ENCODE measurements at regions of chr15 and their contacts with region 1.

Region 1: DNA sequence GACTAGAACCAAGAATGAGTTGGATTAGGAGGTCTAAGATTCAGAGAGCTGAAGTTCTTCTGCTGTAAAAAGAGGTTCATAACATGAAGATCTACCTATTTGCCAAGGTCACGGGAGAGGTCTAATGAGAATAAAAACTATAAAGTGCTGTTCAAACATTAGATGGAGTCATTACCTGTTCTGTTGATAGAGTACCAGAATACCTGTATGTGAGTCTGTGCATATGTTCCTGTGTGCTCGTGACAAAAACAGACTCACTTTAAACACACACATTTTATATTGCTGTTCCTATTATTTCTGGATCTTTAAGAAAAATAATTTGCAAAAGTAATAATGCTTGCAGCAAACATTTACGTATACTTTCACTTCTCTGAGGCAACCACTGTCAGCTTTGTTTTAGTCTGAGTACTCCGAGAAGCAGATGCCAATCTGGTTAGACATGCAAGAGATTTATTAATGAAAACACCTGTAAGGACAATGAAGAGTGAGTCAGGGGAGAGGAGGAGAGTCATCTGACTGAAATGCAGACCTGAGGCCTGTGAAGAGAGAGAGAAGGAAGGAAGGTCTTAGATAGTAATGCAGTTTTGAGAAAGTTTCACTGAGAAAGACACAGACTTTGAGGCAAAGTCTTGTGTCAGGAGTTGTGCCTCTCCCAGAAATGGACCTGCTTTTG is 221.2 kb downstream of the SQOR start:
- DNase-seq: peak; percentile 24
- H3K4me3 Mint-ChIP-seq: peak overlapping the region; percentile 3
- H3K27ac Mint-ChIP-seq: peak overlapping the region; percentile 61
- H3K4me1 Mint-ChIP-seq: peaks cover 25% of the 10 kb centered on the region
- H3K27me3 Mint-ChIP-seq: no peaks in the 10 kb centered on the region
- CTCF ChIP-seq: no peak

Region 2: DNA sequence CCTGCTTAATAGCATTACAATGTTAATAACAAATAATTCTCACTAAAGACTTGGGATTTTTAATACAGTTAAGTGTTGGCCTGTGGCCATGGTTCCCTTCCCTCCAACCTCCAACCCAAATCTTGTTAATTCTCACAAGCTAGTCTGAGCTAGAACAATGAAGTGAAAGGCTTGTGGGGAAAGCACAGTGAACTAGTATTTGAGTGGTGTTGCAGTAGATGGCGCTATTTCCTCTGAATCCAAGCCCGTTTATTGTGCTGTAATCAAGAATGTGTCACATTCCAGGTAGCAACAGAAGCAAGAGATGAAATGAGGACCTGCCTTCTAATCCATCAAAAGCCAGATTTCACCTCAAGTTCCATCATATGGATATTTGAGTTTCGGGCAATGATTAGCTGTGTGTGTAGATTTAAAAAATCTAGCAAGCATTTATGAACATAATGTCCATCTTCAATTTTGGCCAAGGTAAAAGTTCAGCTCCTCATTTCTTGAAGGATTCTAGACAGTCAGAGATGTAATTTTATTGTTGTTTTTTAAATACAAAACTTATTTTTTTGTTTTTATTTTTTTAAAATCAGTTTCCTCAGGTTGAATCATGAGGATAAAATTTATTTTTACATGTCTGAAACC is 60.5 kb before region 1 on chr15:
- CTCF ChIA-PET with region 1: no interaction called
- intact Hi-C with region 1: loop called (anchors 2 kb)
- DNase-seq: peak; percentile 59
- H3K4me3 Mint-ChIP-seq: no peak overlapping the region
- H3K27ac Mint-ChIP-seq: no peak overlapping the region
- H3K4me1 Mint-ChIP-seq: no peaks in the 10 kb centered on the region
- H3K27me3 Mint-ChIP-seq: peaks cover 41% of the 10 kb centered on the region
- CTCF ChIP-seq: peak; percentile 40

Region 3: DNA sequence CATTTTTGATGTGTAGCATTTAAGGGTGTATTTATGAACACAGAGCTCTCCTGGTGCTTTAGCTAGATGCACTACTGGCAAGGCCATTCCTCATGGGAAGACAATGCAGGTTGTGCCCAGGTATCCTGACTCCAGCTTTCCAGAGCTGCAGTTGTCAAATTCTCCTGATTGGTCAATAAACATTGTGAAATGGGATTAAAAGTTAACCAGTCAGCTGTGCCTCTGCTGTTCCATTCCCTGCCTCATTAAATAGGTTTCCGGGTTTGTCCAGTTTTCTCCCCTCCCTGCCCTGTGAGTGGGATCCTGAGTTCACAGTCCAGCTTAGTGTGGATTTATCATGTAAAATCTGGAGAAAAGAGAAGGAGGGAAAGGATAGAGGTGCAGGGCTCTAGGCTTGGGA is 13.9 kb before region 1 on chr15:
- CTCF ChIA-PET with region 1: no interaction called
- intact Hi-C with region 1: loop called (anchors 2 kb)
- DNase-seq: peak; percentile 5
- H3K4me3 Mint-ChIP-seq: no peak overlapping the region
- H3K27ac Mint-ChIP-seq: no peak overlapping the region
- H3K4me1 Mint-ChIP-seq: peaks cover 13% of the 10 kb centered on the region
- H3K27me3 Mint-ChIP-seq: no peaks in the 10 kb centered on the region
- CTCF ChIP-seq: no peak